ENCODE measurements at regions of chr6 and their contacts with region 1.

Region 1: DNA sequence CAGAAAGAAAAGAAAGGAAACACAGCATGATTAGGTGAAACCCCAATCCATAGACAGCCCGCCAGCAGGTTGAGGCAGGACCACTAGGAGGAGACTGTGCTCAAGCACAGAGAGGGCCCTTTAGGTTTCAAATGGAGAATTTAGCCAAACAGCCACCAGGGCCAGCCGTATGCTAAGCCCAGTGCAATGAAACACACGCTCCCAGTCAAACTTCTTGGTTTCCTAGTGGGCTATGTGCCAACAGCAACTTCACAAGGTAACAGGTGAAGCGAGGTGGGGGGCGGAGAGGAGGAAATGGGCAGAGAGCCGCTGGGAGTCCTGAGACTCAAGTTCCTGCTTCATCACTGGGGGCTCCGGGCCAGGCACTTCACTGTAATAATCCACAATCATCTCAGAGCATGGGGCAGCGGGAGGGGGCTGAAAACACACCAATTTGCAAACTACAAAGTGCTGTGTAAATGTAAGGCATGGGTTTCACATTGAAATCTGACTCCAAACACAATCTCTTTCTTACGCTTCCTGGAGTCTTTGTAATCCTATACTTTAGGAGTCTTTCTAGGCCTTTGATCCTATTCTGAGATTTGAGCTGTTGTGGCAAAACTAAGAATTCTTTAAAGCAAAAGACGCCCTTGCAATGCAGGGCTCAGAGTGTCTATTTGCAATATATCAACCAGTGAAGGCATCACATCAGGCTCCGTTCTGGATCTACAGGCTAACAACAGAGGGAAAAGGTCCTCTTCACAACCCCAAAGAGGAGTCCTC is 117.3 kb downstream of the OPRM1 start:
- DNase-seq: peak; percentile 86
- ATAC-seq: peak; percentile 94
- H3K4me3 Mint-ChIP-seq: peak overlapping the region; percentile 58
- H3K27ac Mint-ChIP-seq: peak overlapping the region; percentile 90
- H3K4me1 Mint-ChIP-seq: peaks cover 47% of the 10 kb centered on the region
- H3K27me3 Mint-ChIP-seq: no peaks in the 10 kb centered on the region
- CTCF ChIP-seq: peak; percentile 91

Region 2: DNA sequence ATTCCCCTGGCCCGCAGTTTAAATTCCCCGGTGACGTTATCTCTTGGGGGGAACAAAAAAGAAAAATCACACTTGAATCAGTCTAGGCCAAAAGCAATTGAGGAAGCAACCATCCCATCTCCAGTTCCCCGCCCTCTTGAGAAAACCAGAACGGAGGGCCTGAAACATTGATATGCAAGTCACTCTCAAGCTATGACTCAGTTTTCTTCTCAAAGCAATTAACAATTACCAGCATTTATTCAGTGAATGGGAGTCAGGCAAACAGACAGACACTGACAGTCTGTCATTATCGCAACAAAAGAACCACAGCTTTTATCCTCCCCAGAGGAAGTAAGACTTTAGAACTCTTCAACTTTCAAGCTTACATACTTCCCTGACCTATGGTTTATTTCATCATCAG is 16.4 kb before region 1 on chr6:
- CTCF ChIA-PET with region 1: interaction called, 13 read pairs
- POLR2A ChIA-PET with region 1: no interaction called
- intact Hi-C with region 1: no loop called
- DNase-seq: no peak
- ATAC-seq: no peak
- H3K4me3 Mint-ChIP-seq: no peak overlapping the region
- H3K27ac Mint-ChIP-seq: no peak overlapping the region
- H3K4me1 Mint-ChIP-seq: peaks cover 4% of the 10 kb centered on the region
- H3K27me3 Mint-ChIP-seq: peaks cover 3% of the 10 kb centered on the region
- CTCF ChIP-seq: no peak

Region 3: DNA sequence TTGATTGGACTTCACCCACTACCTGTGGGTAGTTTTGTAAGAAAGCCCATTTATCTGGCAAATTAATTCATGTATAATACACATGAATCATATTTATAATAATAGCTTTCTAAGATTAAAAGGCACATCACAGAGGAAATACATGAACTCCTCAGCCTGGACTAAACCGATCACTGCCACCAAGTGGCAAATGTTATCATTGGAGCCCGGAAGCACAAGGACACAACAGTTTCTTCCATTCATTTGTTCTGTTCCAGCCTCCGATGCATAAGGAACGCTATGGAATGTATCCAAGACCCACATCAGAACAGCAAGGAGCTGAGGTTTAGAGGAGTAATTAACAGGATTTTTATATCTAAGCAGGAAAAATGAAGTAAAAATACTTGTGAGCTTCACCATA is 214.2 kb after region 1 on chr6:
- CTCF ChIA-PET with region 1: interaction called, 73 read pairs
- POLR2A ChIA-PET with region 1: no interaction called
- intact Hi-C with region 1: loop called (anchors 5 kb)
- DNase-seq: peak; percentile 36
- ATAC-seq: peak; percentile 53
- H3K4me3 Mint-ChIP-seq: no peak overlapping the region
- H3K27ac Mint-ChIP-seq: no peak overlapping the region
- H3K4me1 Mint-ChIP-seq: peaks cover 13% of the 10 kb centered on the region
- H3K27me3 Mint-ChIP-seq: no peaks in the 10 kb centered on the region
- CTCF ChIP-seq: peak; percentile 61